Esophagus muscularis mucosa (tissue), 4 donors: ENCODE measurements at regions of chr1 and their contacts with region 1.

Region 1: GRCh38 chr1:28789412-28789811 is 22.6 kb upstream of the OPRD1 start:
- DNase-seq: no peak
- H3K4me3 ChIP-seq: no peak overlapping the region
- H3K27ac ChIP-seq: no peak overlapping the region
- H3K4me1 ChIP-seq: peaks cover 0 to 6% (median 5%) of the 10 kb centered on the region in 4 donors
- H3K27me3 ChIP-seq: no peaks in the 10 kb centered on the region
- CTCF ChIP-seq: no peak
- EP300 ChIP-seq: no peak
- POLR2A ChIP-seq: no peak

Region 2: GRCh38 chr1:28716336-28716735 is 73.1 kb before region 1 on chr1:
- intact Hi-C with region 1: no loop called
- DNase-seq: no peak
- H3K4me3 ChIP-seq: no peak overlapping the region
- H3K27ac ChIP-seq: no peak overlapping the region
- H3K4me1 ChIP-seq: peaks cover 0 to 7% (median 3%) of the 10 kb centered on the region in 4 donors
- H3K27me3 ChIP-seq: no peaks in the 10 kb centered on the region
- CTCF ChIP-seq: no peak
- EP300 ChIP-seq: no peak
- POLR2A ChIP-seq: no peak

Region 3: GRCh38 chr1:29081201-29081600 is 291.8 kb after region 1 on chr1:
- intact Hi-C with region 1: no loop called
- DNase-seq: no peak
- H3K4me3 ChIP-seq: no peak overlapping the region
- H3K27ac ChIP-seq: no peak overlapping the region
- H3K4me1 ChIP-seq: no peaks in the 10 kb centered on the region
- H3K27me3 ChIP-seq: no peaks in the 10 kb centered on the region
- CTCF ChIP-seq: no peak
- EP300 ChIP-seq: no peak
- POLR2A ChIP-seq: no peak

Region 4: GRCh38 chr1:29202584-29203340 is 413.4 kb after region 1 on chr1:
- intact Hi-C with region 1: loop called (anchors 5 kb)
- DNase-seq: peak; percentile 99
- H3K4me3 ChIP-seq: no peak overlapping the region
- H3K27ac ChIP-seq: peak overlapping the region; percentile 74 to 83 (median 80)
- H3K4me1 ChIP-seq: peaks cover 7 to 11% (median 10%) of the 10 kb centered on the region in 4 donors
- H3K27me3 ChIP-seq: no peaks in the 10 kb centered on the region
- CTCF ChIP-seq: peak; percentile 95 to 97 (median 95)
- EP300 ChIP-seq: no peak
- POLR2A ChIP-seq: no peak